Lower leg skin (tissue), 4 donors: ENCODE measurements at regions of chr1 and their contacts with region 1.

Region 1: GRCh38 chr1:150558761-150559645 is 9.8 kb downstream of the ADAMTSL4 start:
- DNase-seq: no peak
- H3K4me3 ChIP-seq: no peak overlapping the region
- CTCF ChIP-seq: no peak
- POLR2A ChIP-seq: no peak

Region 2: DNA sequence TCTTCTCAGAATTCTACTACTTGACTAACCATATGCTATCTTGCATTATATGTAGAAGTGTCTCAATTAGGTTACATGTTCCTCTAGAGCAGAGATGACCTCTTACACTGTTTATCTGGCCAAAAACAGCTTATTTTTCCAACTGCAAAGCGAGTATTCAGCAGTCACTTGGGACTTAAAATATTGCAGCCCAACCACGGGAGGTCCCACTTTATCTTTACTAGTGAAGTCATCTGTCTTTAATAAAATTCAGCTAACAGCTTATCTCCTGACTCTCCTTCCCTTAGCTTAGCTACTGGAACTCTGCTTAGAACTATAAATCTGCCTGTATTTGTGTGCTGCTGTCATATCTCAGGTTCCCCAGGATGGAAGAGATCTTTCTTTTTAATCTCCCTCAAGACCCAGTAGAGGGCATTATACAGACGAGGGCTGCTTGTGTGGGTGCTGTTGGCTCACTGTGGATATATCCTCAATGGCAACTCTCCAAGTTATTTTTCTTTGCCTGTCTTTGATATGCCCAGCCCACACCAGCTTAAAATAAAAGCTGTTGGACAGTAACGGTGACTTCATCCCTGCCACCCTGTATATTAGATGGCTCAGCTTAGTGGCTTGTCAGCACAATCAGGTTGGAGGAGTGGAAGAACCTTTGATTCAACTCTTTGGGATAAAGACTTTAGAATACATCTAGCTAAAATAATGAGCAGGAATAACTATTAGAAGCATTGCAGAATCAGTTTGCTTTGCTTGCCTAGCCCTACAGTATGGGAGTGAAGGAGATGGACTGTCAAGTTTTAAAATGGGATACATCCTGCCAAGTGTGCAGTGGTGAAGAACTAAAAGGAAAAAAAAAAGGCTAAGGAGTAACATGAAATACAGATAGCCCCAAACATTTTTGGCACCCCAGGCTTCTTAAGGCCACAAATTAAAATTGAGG is 60.8 kb after region 1 on chr1:
- intact Hi-C with region 1: loop called (anchors 5 kb)
- DNase-seq: no peak
- H3K4me3 ChIP-seq: no peak overlapping the region
- CTCF ChIP-seq: no peak
- POLR2A ChIP-seq: no peak